Heart left ventricle (tissue), 16 donors: ENCODE measurements at regions of chr4 and their contacts with region 1.

Region 1: DNA sequence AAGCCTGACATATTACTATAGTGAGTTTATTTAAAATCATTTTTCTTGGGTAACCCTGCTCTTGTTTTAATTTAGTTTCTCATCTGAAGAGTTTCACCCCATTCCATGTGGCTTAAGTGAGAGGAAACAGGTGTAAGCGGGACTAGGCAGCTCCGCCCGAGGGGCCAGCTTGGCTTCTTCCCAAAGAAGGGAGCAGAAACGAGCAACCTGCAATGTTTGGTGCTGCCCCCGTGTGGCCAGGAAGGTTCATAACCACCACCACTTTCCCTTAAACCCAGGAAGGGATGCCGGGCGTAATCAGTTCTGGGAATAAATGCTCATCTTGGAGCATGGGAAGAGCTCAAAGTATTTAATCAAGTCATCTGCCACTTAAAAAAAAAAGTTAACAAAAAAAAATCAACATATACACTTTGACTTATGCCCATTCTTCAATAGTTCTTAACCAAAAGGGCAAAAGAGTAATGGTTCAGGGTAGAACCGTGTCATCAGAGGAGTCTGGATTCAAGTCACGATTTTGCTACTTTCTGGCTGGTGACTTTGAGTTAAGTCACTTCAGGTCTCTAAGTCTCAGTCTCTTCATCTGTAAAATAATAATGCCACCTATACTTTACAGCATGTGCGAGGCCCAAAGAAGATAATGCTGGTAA is 147.9 kb downstream of the NSUN7 start:
- DNase-seq: peak; percentile 60 to 79 (median 62)
- ATAC-seq: peak in 3 of 4 donors; percentile 58 to 71 (median 59)
- H3K4me3 ChIP-seq: peak overlapping the region in 1 of 12 donors; percentile 24
- H3K27ac ChIP-seq: no peak overlapping the region
- H3K4me1 ChIP-seq: peaks cover 0 to 6% (median 0%) of the 10 kb centered on the region in 12 donors
- H3K27me3 ChIP-seq: no peaks in the 10 kb centered on the region
- CTCF ChIP-seq: peak; percentile 59 to 82 (median 76)
- POLR2A ChIP-seq: no peak

Region 2: DNA sequence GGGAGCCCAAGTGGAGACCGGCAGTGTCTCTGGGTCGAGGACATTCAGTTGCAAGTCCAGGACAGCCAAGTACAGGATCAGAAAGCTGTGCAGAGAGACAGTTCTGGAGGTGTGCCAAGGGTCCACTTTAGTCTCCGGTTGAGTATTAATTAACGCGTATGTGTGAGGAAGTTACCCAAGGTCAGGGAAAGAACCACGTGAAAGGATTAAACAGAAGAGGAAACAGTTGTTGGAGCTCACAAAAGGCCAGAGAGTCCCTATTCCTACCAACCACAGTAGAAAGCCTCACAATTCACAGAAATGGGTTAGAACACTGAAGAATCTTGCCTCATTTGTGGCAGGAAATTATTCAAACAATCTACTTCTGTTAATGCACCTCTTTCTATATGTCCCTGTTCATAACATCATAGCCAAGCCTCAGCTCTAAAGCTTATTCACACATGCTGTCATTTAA is 165.9 kb before region 1 on chr4:
- intact Hi-C with region 1: loop called (anchors 2 to 10 kb)
- DNase-seq: peak; percentile 37 to 63 (median 44)
- ATAC-seq: peak; percentile 60 to 82 (median 74)
- H3K4me3 ChIP-seq: no peak overlapping the region
- H3K27ac ChIP-seq: peak overlapping the region in 5 of 12 donors; percentile 33 to 92 (median 60)
- H3K4me1 ChIP-seq: peaks cover 0 to 35% (median 0%) of the 10 kb centered on the region in 12 donors
- H3K27me3 ChIP-seq: no peaks in the 10 kb centered on the region
- CTCF ChIP-seq: no peak
- POLR2A ChIP-seq: no peak

Region 3: DNA sequence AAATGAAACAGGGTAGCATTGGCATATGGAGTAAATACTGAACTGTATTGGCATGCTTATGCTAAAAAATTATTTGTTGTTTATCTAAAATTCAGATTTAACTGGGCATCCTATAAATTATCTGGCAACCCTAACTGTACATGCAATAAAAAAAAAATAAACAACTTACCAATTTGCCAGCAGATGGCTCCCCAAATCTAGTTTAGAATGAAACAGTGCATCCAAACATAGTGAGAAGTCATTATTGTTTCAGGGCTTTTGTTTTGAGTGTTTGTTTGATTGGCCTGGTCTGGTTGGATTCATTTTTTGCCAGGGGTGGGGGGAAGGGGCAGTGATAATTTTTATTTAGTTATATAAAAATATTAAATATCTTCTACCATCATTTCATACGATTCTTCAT is 160.8 kb before region 1 on chr4:
- intact Hi-C with region 1: loop called (anchors 2 to 10 kb)
- DNase-seq: no peak
- ATAC-seq: no peak
- H3K4me3 ChIP-seq: no peak overlapping the region
- H3K27ac ChIP-seq: no peak overlapping the region
- H3K4me1 ChIP-seq: peaks cover 0 to 20% (median 0%) of the 10 kb centered on the region in 12 donors
- H3K27me3 ChIP-seq: peaks cover 0 to 5% (median 0%) of the 10 kb centered on the region in 9 donors
- CTCF ChIP-seq: peak in 8 of 12 donors; percentile 18 to 50 (median 31)
- POLR2A ChIP-seq: no peak

Region 4: DNA sequence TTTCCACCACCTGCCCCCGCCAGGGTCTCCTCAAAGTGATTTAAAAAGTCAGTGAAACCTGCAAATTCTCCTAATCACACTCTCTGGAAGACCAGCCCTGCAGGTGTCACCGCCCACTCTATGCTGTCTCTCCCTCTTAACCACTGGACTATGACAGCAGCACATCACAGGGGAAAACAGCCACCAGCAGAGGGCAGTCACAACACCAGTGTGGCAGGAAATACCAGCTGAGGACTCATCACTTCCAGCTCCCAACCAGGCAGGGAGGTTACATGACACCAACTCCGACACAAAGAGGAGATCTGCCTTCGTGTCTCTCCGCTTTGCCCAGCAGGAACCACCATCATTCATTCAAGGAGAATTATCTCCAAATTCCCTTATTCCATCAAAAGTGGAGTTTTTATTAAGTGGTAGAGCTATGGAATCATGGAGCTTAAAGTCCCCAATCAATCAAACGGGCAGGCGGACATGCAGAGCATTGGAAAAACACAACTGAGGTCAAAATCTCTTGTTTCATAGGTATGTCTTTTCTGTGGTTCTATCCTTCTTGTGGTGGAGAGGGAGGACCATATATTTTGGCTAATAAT is 56.6 kb before region 1 on chr4:
- intact Hi-C with region 1: loop called in 5 of 10 experiments (anchors 2 to 10 kb)
- DNase-seq: peak; percentile 63 to 82 (median 70)
- ATAC-seq: peak; percentile 32 to 70 (median 66)
- H3K4me3 ChIP-seq: no peak overlapping the region
- H3K27ac ChIP-seq: peak overlapping the region in 2 of 12 donors; percentile 68 to 73
- H3K4me1 ChIP-seq: peaks cover 0 to 27% (median 12%) of the 10 kb centered on the region in 12 donors
- H3K27me3 ChIP-seq: no peaks in the 10 kb centered on the region
- CTCF ChIP-seq: peak; percentile 40 to 71 (median 56)
- POLR2A ChIP-seq: no peak